Spleen (tissue), 13 donors: ENCODE measurements at regions of chr6 and their contacts with region 1.

Region 1: DNA sequence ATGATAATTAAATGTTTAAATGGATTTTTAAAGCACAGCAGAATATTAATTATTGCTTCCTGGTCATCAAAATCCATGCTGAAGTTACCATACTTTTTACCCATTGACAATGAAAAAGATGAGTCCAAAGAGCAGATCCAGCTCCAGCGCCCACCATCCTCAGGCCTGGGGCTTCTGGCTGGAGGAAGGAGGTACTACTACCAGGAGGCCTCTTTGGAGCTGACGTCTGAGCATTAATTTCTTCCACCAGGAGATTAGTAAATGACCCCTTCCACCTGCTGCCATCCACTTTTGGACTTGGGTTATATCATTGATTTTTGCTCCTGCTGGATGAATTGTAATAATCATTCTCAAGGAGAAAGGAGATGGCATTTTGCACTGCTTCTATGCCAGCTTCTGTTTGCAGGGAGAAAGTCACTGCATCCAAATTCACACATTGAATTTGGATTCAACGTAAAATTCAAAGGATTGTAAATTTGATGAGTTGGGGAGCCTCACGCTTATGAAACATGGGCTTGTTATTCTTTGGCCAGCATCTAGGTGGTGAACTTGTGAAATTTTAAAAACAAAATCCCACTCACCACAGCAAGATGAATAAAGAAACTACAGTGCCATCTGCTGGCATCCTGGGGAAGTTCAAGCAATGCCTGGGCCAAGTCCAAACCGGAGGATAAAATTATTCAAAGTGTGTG is 121.8 kb downstream of the SASH1 start:
- DNase-seq: no peak
- H3K4me3 ChIP-seq: no peak overlapping the region
- H3K27ac ChIP-seq: peak overlapping the region in 1 of 8 donors; percentile 14
- H3K4me1 ChIP-seq: peaks cover 0 to 29% (median 14%) of the 10 kb centered on the region in 6 donors
- H3K27me3 ChIP-seq: peaks cover 0 to 2% (median 0%) of the 10 kb centered on the region in 7 donors
- CTCF ChIP-seq: peak; percentile 78 to 95 (median 90)
- POLR2A ChIP-seq: no peak

Region 2: DNA sequence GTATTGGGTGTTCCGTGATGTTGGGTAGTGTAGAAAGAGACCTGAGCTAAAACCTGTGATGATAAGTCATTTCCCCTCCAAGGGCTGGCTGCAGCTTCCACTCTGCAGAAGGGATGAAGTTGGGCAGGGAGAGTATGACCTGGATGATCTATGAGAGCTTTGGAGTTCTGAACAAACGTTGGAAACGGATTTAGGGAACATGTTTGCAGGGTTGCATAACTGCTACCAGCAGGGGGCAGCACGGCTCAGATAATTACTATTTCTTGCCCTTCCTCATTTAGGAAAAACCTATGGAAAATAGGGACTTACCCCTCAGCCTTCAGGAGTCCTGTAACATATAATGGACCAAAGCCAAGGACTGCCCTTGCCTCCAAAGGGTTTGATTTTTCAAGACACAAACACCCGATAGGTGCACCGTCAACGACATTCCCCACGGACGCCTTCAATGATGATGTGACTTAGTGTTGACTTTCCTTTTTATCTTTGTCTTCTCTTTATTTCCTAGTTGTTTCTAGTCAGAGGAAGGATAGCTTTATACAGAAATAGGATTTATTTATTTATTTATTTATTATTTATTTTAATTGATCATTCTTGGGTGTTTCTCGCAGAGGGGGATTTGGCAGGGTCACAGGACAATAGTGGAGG is 286.8 kb before region 1 on chr6:
- intact Hi-C with region 1: loop called (anchors 10 kb)
- DNase-seq: no peak
- H3K4me3 ChIP-seq: no peak overlapping the region
- H3K27ac ChIP-seq: no peak overlapping the region
- H3K4me1 ChIP-seq: no peaks in the 10 kb centered on the region
- H3K27me3 ChIP-seq: peaks cover 0 to 20% (median 0%) of the 10 kb centered on the region in 7 donors
- CTCF ChIP-seq: peak in 10 of 11 experiments; percentile 31 to 76 (median 64)
- POLR2A ChIP-seq: no peak

Region 3: DNA sequence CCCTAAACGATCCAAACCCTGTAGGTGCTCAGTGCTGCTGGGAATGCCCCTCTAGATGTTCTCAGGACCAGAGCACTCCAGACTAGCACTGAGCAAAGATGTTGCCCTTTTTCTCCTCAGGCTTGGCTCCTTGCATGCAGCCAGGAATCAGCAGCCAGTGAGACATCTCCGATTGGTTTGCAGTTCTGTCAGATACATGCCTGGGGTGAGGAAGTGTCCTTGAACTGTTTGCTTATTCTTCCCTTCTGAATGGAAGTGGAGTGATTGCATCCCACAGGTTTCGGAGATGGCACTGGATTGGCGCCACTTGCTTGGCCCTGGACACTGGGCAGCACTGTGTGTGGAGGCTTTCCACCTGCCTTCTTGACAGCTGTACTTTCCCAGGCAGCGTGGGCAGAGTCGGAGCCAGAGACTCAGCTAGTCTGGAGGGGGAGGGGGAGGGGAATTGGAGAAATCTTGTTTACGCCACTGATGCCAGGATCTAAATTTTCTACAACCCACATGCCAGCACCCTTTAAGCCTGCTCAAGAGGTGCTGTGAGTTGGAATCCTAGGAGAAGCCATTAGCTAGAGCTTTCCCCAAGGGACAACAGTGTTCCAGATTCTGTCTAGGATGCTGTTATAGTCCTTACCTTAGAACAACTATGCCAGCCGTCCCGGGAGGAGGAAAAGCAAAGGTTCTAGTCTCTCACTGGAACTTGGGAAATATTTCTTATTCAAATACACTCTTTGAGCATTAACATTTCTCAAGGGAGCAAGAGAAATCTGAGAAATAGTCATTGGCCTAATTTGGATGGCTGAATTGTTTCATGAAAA is 171.1 kb before region 1 on chr6:
- intact Hi-C with region 1: no loop called
- DNase-seq: no peak
- H3K4me3 ChIP-seq: no peak overlapping the region
- H3K27ac ChIP-seq: no peak overlapping the region
- H3K4me1 ChIP-seq: peaks cover 0 to 6% (median 3%) of the 10 kb centered on the region in 6 donors
- H3K27me3 ChIP-seq: peaks cover 0 to 4% (median 0%) of the 10 kb centered on the region in 7 donors
- CTCF ChIP-seq: no peak
- POLR2A ChIP-seq: no peak

Region 4: DNA sequence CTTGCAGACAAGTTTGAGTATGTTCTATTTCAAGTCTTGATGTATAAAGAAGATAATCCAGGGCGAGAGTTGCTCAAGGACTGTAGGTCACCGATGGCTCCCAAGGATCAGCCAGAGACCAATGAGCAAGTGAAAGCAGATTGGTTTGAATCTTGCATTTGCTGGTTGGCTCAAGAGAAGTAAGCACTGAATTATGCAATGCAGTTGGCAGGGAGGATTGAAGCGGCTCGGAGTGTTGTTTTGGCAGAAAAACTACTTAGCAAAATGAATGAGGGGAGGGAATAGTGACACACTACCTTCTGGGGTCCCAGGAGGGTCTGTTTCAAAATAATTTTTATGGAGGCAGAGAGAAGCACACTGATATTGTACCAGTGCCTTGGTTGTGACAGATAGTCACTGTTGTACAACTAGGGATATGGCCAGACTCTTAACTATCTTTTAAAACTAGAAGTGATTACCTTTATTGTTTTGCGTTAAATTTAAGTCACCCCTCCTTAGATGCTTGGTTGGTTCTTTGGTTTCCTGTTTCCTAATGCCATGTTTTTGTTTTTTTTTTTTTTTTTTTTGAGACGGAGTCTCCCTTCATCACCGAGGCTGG is 106.2 kb before region 1 on chr6:
- intact Hi-C with region 1: no loop called
- DNase-seq: no peak
- H3K4me3 ChIP-seq: no peak overlapping the region
- H3K27ac ChIP-seq: peak overlapping the region in 1 of 8 donors; percentile 33
- H3K4me1 ChIP-seq: peaks cover 0 to under 1% (median 0%) of the 10 kb centered on the region in 6 donors
- H3K27me3 ChIP-seq: no peaks in the 10 kb centered on the region
- CTCF ChIP-seq: no peak
- POLR2A ChIP-seq: no peak